HEK293T (cell line): ENCODE measurements at regions of chr10 and their contacts with region 1.

Region 1: DNA sequence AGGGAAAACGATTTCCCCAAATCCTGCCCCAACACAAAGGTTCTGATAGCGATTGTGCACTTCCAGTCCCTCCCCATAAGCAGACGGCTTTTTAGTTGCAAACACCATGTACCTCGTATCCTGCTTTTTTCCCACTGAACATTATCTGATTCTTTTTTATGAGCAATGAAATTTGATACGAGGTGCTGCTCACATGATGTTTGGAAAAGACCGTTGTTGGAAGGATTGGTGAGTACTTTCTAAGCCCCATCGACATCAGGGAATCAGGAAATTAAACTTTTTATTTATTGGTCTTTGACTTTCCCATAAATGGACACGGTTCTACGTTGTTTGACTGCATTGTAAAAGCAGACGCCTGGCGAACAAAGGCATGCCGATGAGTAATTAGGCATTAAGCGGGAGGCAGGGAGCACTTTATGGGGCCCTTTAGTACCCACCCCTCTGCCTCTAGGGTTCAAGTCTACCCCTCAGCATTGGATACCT is 49.4 kb downstream of the TEX36 start:
- DNase-seq: peak; percentile 74

Region 2: DNA sequence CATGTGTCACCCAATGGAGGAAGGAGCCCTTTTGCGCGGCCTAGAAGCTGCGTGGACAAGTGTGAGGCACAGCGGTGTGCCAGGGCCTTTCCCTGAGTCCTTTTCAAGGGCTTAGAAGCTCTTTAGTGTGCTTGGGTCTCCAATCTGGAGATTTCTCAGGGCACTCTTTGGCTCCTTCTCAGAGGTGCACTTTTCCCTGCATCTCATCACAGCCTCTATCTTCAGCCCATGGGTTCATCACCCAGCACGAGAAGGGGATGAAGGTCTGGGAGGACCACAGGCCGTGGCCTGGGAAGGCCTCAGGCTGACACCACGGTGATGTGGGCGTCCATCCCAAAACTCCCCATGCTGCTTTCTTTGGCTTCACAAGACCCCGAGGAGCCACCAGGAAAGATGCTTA is 184.0 kb before region 1 on chr10:
- CTCF ChIA-PET with region 1: interaction called, 11 read pairs
- POLR2A ChIA-PET with region 1: no interaction called
- DNase-seq: no peak

Region 3: GRCh38 chr10:125719146-125720001 is 85.8 kb after region 1 on chr10 and contains the start of gene EDRF1:
- CTCF ChIA-PET with region 1: no interaction called
- POLR2A ChIA-PET with region 1: interaction called, 10 read pairs
- DNase-seq: peak; percentile 100